ENCODE measurements at regions of chr20 and their contacts with region 1.

Region 1: GRCh38 chr20:49610701-49611538 is 43.0 kb upstream of the PTGIS start:
- DNase-seq: peak; percentile 79 to 80
- ATAC-seq: peak; percentile 84 to 90 (median 86)
- H3K4me3 ChIP-seq: no peak overlapping the region
- H3K4me3 Mint-ChIP-seq: peak overlapping the region; percentile 68
- H3K27ac ChIP-seq: no peak overlapping the region
- H3K27ac Mint-ChIP-seq: peak overlapping the region in 1 of 2 donors; percentile 37
- H3K4me1 ChIP-seq: peaks cover 20% of the 10 kb centered on the region
- H3K4me1 Mint-ChIP-seq: peaks cover 12 to 20% of the 10 kb centered on the region in 2 donors
- H3K27me3 ChIP-seq: no peaks in the 10 kb centered on the region
- H3K27me3 Mint-ChIP-seq: peaks cover 6% of the 10 kb centered on the region in 2 donors
- CTCF ChIP-seq: peak; percentile 100

Region 2: GRCh38 chr20:47656318-47656717 is 1954.6 kb before region 1 on chr20:
- intact Hi-C with region 1: no loop called
- DNase-seq: no peak
- ATAC-seq: no peak
- H3K4me3 ChIP-seq: no peak overlapping the region
- H3K4me3 Mint-ChIP-seq: no peak overlapping the region
- H3K27ac ChIP-seq: no peak overlapping the region
- H3K27ac Mint-ChIP-seq: peak overlapping the region in 1 of 2 donors; percentile 49
- H3K4me1 ChIP-seq: no peaks in the 10 kb centered on the region
- H3K4me1 Mint-ChIP-seq: peaks cover 0 to 7% of the 10 kb centered on the region in 2 donors
- H3K27me3 ChIP-seq: no peaks in the 10 kb centered on the region
- H3K27me3 Mint-ChIP-seq: no peaks in the 10 kb centered on the region
- CTCF ChIP-seq: no peak

Region 3: GRCh38 chr20:49338061-49338460 is 272.9 kb before region 1 on chr20:
- intact Hi-C with region 1: loop called (anchors 1 kb)
- DNase-seq: no peak
- ATAC-seq: no peak
- H3K4me3 ChIP-seq: no peak overlapping the region
- H3K4me3 Mint-ChIP-seq: no peak overlapping the region
- H3K27ac ChIP-seq: no peak overlapping the region
- H3K27ac Mint-ChIP-seq: no peak overlapping the region
- H3K4me1 ChIP-seq: no peaks in the 10 kb centered on the region
- H3K4me1 Mint-ChIP-seq: peaks cover 0 to 5% of the 10 kb centered on the region in 2 donors
- H3K27me3 ChIP-seq: no peaks in the 10 kb centered on the region
- H3K27me3 Mint-ChIP-seq: peaks cover 12 to 15% of the 10 kb centered on the region in 2 donors
- CTCF ChIP-seq: no peak

Region 4: GRCh38 chr20:49508435-49509199 is 102.3 kb before region 1 on chr20:
- intact Hi-C with region 1: no loop called
- DNase-seq: peak in 1 of 2 donors; percentile 54
- ATAC-seq: peak in 1 of 3 donors; percentile 38
- H3K4me3 ChIP-seq: no peak overlapping the region
- H3K4me3 Mint-ChIP-seq: no peak overlapping the region
- H3K27ac ChIP-seq: no peak overlapping the region
- H3K27ac Mint-ChIP-seq: no peak overlapping the region
- H3K4me1 ChIP-seq: no peaks in the 10 kb centered on the region
- H3K4me1 Mint-ChIP-seq: no peaks in the 10 kb centered on the region
- H3K27me3 ChIP-seq: no peaks in the 10 kb centered on the region
- H3K27me3 Mint-ChIP-seq: peaks cover 19 to 31% of the 10 kb centered on the region in 2 donors
- CTCF ChIP-seq: peak; percentile 17

Region 5: DNA sequence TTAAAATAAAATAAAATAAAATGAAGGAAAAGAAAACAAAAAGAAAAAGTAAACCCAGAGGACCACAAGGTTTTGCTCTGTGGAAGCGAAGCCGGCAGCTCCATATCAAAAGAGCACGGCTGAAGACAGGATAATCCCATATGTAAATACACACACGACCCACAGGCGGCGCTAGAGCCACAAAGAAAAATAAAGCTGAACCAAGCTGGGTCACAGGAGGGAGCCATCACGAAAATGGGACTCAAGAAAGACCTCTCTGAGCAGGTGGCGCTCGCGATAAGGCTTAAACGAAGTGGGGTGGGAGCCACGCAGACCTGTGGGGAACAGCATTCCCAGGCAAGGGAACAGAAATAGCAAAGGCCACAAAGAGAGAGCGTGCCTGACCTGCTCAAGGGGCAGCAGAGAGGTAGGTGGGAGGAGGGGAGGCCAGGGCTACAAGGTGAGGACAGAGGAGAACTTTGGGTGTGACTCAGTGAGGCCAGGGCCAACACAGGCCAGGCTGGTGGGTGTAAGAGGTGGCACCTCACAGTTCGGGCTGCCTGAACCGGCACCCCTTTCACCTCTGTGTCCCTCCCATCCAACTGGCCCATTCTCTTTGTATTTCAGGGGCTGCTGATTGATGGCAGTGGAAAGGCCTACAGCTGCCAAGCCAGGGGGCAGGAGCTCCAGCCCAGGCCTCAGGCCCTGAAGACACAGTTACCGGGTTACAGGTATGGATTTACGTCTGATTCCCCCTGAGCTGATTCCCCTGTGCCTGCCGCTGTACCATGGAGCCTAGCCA is 69.0 kb before region 1 on chr20:
- intact Hi-C with region 1: loop called (anchors 1 kb)
- DNase-seq: peak; percentile 47 to 81
- ATAC-seq: peak; percentile 55 to 79 (median 73)
- H3K4me3 ChIP-seq: no peak overlapping the region
- H3K4me3 Mint-ChIP-seq: no peak overlapping the region
- H3K27ac ChIP-seq: no peak overlapping the region
- H3K27ac Mint-ChIP-seq: no peak overlapping the region
- H3K4me1 ChIP-seq: peaks cover 3% of the 10 kb centered on the region
- H3K4me1 Mint-ChIP-seq: peaks cover 0 to 10% of the 10 kb centered on the region in 2 donors
- H3K27me3 ChIP-seq: no peaks in the 10 kb centered on the region
- H3K27me3 Mint-ChIP-seq: peaks cover 0 to 10% of the 10 kb centered on the region in 2 donors
- CTCF ChIP-seq: peak; percentile 82

Region 6: GRCh38 chr20:49690899-49691620 is 80.1 kb after region 1 on chr20:
- intact Hi-C with region 1: no loop called
- DNase-seq: no peak
- ATAC-seq: no peak
- H3K4me3 ChIP-seq: no peak overlapping the region
- H3K4me3 Mint-ChIP-seq: no peak overlapping the region
- H3K27ac ChIP-seq: no peak overlapping the region
- H3K27ac Mint-ChIP-seq: peak overlapping the region in 1 of 2 donors; percentile 70
- H3K4me1 ChIP-seq: peaks cover 21% of the 10 kb centered on the region
- H3K4me1 Mint-ChIP-seq: peaks cover 65 to 68% of the 10 kb centered on the region in 2 donors
- H3K27me3 ChIP-seq: no peaks in the 10 kb centered on the region
- H3K27me3 Mint-ChIP-seq: no peaks in the 10 kb centered on the region
- CTCF ChIP-seq: no peak

Region 7: GRCh38 chr20:49713753-49714712 is 103.1 kb after region 1 on chr20 and contains the start of gene B4GALT5:
- intact Hi-C with region 1: loop called (anchors 5 kb)
- DNase-seq: peak; percentile 76 to 82
- ATAC-seq: peak; percentile 86 to 93 (median 90)
- H3K4me3 ChIP-seq: peak within 1 kb of the TSS; percentile 93
- H3K4me3 Mint-ChIP-seq: peak within 1 kb of the TSS; percentile 93
- H3K27ac ChIP-seq: peak within 1 kb of the TSS; percentile 81
- H3K27ac Mint-ChIP-seq: peak within 1 kb of the TSS; percentile 86 to 93
- H3K4me1 ChIP-seq: peaks cover 20% of the 10 kb centered on the region
- H3K4me1 Mint-ChIP-seq: peaks cover 42 to 45% of the 10 kb centered on the region in 2 donors
- H3K27me3 ChIP-seq: no peaks in the 10 kb centered on the region
- H3K27me3 Mint-ChIP-seq: no peaks in the 10 kb centered on the region
- CTCF ChIP-seq: no peak
- total RNA-seq, gene B4GALT5: 15.5 to 29.1 (median 28.6) TPM

Region 8: GRCh38 chr20:49846206-49846807 is 235.4 kb after region 1 on chr20:
- intact Hi-C with region 1: loop called (anchors 1 kb)
- DNase-seq: peak in 1 of 2 donors; percentile 80
- ATAC-seq: peak; percentile 77 to 89 (median 84)
- H3K4me3 ChIP-seq: no peak overlapping the region
- H3K4me3 Mint-ChIP-seq: no peak overlapping the region
- H3K27ac ChIP-seq: no peak overlapping the region
- H3K27ac Mint-ChIP-seq: no peak overlapping the region
- H3K4me1 ChIP-seq: no peaks in the 10 kb centered on the region
- H3K4me1 Mint-ChIP-seq: peaks cover 0 to 10% of the 10 kb centered on the region in 2 donors
- H3K27me3 ChIP-seq: no peaks in the 10 kb centered on the region
- H3K27me3 Mint-ChIP-seq: no peaks in the 10 kb centered on the region
- CTCF ChIP-seq: peak; percentile 66

Region 9: GRCh38 chr20:49888345-49888966 is 277.5 kb after region 1 on chr20:
- intact Hi-C with region 1: loop called (anchors 1 kb)
- DNase-seq: peak in 1 of 2 donors; percentile 75
- ATAC-seq: peak in 2 of 3 donors; percentile 57 to 59
- H3K4me3 ChIP-seq: no peak overlapping the region
- H3K4me3 Mint-ChIP-seq: no peak overlapping the region
- H3K27ac ChIP-seq: no peak overlapping the region
- H3K27ac Mint-ChIP-seq: peak overlapping the region; percentile 69 to 70
- H3K4me1 ChIP-seq: peaks cover 14% of the 10 kb centered on the region
- H3K4me1 Mint-ChIP-seq: peaks cover 5 to 11% of the 10 kb centered on the region in 2 donors
- H3K27me3 ChIP-seq: no peaks in the 10 kb centered on the region
- H3K27me3 Mint-ChIP-seq: no peaks in the 10 kb centered on the region
- CTCF ChIP-seq: peak; percentile 71

Region 10: GRCh38 chr20:49928401-49929141 is 317.7 kb after region 1 on chr20:
- intact Hi-C with region 1: loop called (anchors 1 kb)
- DNase-seq: peak; percentile 72 to 92
- ATAC-seq: peak; percentile 90 to 98 (median 91)
- H3K4me3 ChIP-seq: no peak overlapping the region
- H3K4me3 Mint-ChIP-seq: no peak overlapping the region
- H3K27ac ChIP-seq: no peak overlapping the region
- H3K27ac Mint-ChIP-seq: no peak overlapping the region
- H3K4me1 ChIP-seq: no peaks in the 10 kb centered on the region
- H3K4me1 Mint-ChIP-seq: no peaks in the 10 kb centered on the region
- H3K27me3 ChIP-seq: no peaks in the 10 kb centered on the region
- H3K27me3 Mint-ChIP-seq: no peaks in the 10 kb centered on the region
- CTCF ChIP-seq: peak; percentile 96

Region 11: DNA sequence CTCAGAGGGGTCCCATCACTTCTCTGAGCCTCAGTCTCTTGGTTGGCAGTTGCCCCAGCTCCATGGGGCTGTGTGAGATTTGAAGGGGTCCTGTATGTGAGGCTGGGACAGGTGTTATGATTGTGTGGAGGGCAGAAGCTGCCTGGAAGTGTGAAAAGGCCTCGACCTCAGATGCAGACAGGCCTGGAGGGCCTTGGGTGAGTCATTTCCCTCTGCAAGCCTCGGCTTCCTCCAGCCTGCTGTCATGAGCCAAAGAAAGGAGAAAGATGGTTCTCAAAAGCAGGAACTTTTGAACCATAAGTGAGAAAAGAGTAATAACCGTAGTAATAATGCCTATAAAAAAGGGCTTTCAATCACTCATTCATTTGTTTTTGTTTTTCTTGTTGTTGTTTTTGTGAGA is 409.4 kb after region 1 on chr20:
- intact Hi-C with region 1: no loop called
- DNase-seq: no peak
- ATAC-seq: peak in 1 of 3 donors; percentile 44
- H3K4me3 ChIP-seq: no peak overlapping the region
- H3K4me3 Mint-ChIP-seq: no peak overlapping the region
- H3K27ac ChIP-seq: no peak overlapping the region
- H3K27ac Mint-ChIP-seq: no peak overlapping the region
- H3K4me1 ChIP-seq: peaks cover 8% of the 10 kb centered on the region
- H3K4me1 Mint-ChIP-seq: peaks cover 0 to 12% of the 10 kb centered on the region in 2 donors
- H3K27me3 ChIP-seq: no peaks in the 10 kb centered on the region
- H3K27me3 Mint-ChIP-seq: peaks cover 6 to 7% of the 10 kb centered on the region in 2 donors
- CTCF ChIP-seq: no peak